Endothelial cell of umbilical vein (primary cell): ENCODE measurements at regions of chr19 and their contacts with region 1.

Region 1: GRCh38 chr19:16542045-16542909 is at the start of gene CHERP:
- DNase-seq: peak; percentile 93
- H3K4me3 ChIP-seq: peak within 1 kb of the TSS; percentile 66 to 85 (median 70)
- H3K27ac ChIP-seq: peak within 1 kb of the TSS; percentile 70
- H3K4me1 ChIP-seq: peaks cover 12% of the 10 kb centered on the region
- H3K27me3 ChIP-seq: no peaks in the 10 kb centered on the region
- CTCF ChIP-seq: no peak
- POLR2A ChIP-seq: peak; percentile 91
- total RNA-seq, gene CHERP: 53.9 and 54.5 TPM in 2 replicates

Region 2: GRCh38 chr19:16435238-16435917 is 106.9 kb before region 1 on chr19:
- CTCF ChIA-PET with region 1: no interaction called
- POLR2A ChIA-PET with region 1: no interaction called
- dilution Hi-C with region 1: no loop called
- intact Hi-C with region 1: loop called (anchors 5 kb)
- DNase-seq: peak; percentile 84
- H3K4me3 ChIP-seq: no peak overlapping the region
- H3K27ac ChIP-seq: peak overlapping the region; percentile 72
- H3K4me1 ChIP-seq: peaks cover 27% of the 10 kb centered on the region
- H3K27me3 ChIP-seq: no peaks in the 10 kb centered on the region
- CTCF ChIP-seq: no peak
- POLR2A ChIP-seq: no peak

Region 3: DNA sequence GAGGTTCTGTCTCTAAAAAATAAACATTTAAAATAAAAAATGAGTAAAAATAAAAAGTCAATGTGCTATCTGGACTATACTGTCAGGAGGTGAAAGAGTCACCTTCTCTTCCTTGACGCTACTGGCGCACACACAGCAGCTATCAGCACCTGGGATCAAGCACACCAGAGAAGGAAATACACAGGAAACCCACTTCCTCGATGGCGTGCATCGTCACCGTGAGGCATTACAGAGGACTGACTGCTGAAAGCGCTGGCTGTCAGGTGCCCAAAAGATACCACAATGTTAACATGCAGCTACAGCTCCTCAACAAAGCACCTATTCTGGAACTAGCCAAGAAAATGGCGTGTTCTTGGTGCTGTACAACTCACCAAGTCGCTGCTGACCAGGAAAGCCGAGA is 23.9 kb after region 1 on chr19:
- CTCF ChIA-PET with region 1: interaction called, 4 read pairs
- POLR2A ChIA-PET with region 1: no interaction called
- dilution Hi-C with region 1: no loop called
- intact Hi-C with region 1: loop called (anchors 1 kb)
- DNase-seq: peak; percentile 83
- H3K4me3 ChIP-seq: no peak overlapping the region
- H3K27ac ChIP-seq: peak overlapping the region; percentile 64
- H3K4me1 ChIP-seq: peaks cover 11% of the 10 kb centered on the region
- H3K27me3 ChIP-seq: no peaks in the 10 kb centered on the region
- CTCF ChIP-seq: no peak
- POLR2A ChIP-seq: no peak

Region 4: GRCh38 chr19:16572332-16573211 is 30.3 kb after region 1 on chr19 and contains the start of gene SLC35E1:
- CTCF ChIA-PET with region 1: no interaction called
- POLR2A ChIA-PET with region 1: no interaction called
- dilution Hi-C with region 1: no loop called
- intact Hi-C with region 1: loop called (anchors 1 kb)
- DNase-seq: peak; percentile 93
- H3K4me3 ChIP-seq: peak within 1 kb of the TSS; percentile 64 to 75 (median 73)
- H3K27ac ChIP-seq: peak within 1 kb of the TSS; percentile 73
- H3K4me1 ChIP-seq: peaks cover 16% of the 10 kb centered on the region
- H3K27me3 ChIP-seq: no peaks in the 10 kb centered on the region
- CTCF ChIP-seq: no peak
- POLR2A ChIP-seq: no peak
- total RNA-seq, gene SLC35E1: 30.4 and 37.5 TPM in 2 replicates

Region 5: GRCh38 chr19:16584248-16585141 is 42.2 kb after region 1 on chr19:
- CTCF ChIA-PET with region 1: no interaction called
- POLR2A ChIA-PET with region 1: no interaction called
- dilution Hi-C with region 1: no loop called
- intact Hi-C with region 1: no loop called
- DNase-seq: peak; percentile 80
- H3K4me3 ChIP-seq: no peak overlapping the region
- H3K27ac ChIP-seq: peak overlapping the region; percentile 54
- H3K4me1 ChIP-seq: peaks cover 39% of the 10 kb centered on the region
- H3K27me3 ChIP-seq: no peaks in the 10 kb centered on the region
- CTCF ChIP-seq: no peak
- POLR2A ChIP-seq: peak; percentile 28

Region 6: GRCh38 chr19:16594681-16595091 is 52.4 kb after region 1 on chr19:
- CTCF ChIA-PET with region 1: no interaction called
- POLR2A ChIA-PET with region 1: no interaction called
- dilution Hi-C with region 1: no loop called
- intact Hi-C with region 1: no loop called
- DNase-seq: no peak
- H3K4me3 ChIP-seq: no peak overlapping the region
- H3K27ac ChIP-seq: no peak overlapping the region
- H3K4me1 ChIP-seq: peaks cover 5% of the 10 kb centered on the region
- H3K27me3 ChIP-seq: no peaks in the 10 kb centered on the region
- CTCF ChIP-seq: no peak
- POLR2A ChIP-seq: no peak